ENCODE measurements at regions of chrX and their contacts with region 1.

Region 1: DNA sequence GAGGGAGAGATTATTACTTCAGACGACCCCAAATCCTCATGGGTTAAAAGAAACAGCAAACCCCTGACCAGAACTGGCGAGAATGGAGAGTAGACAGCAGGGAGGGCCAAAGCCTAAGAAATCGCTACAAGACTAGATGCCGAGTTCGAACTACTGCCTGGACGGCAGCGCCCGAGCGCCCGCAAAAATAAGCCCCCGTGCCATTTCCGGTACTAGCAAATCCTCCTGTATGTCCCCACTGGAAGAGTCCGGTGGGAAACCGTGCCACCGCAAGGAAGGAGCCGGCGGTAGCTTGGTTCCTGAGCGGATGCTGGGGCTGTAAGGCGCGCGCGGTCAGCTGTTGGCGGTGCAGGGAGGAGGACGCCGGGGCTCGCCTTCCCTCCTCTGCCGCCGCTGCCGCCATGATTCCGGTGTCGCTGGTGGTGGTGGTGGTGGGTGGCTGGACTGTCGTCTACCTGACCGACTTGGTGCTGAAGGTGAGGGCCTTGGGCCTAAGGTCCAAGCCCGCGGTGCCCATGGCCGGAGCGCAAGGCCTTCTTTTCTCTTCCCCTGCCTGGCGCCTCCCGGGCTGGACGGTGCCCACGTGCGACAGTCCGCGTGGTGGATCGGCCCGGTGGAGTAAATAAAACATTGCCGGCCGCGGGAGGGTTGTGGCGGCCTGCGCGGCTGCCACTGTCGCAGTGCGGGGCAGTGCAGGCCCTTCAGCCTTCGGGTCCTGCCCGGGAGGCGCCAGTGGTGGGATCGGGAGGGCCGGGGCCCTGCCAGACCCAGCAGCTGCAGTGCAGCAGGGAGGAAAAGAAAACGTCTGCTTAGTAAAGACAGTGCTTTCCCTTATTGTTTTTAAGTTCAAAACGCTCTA is at the start of gene MBTPS2:
- DNase-seq: peak; percentile 73
- H3K4me3 Mint-ChIP-seq: peak within 1 kb of the TSS; percentile 88
- H3K27ac Mint-ChIP-seq: peak within 1 kb of the TSS; percentile 90
- H3K4me1 Mint-ChIP-seq: peaks cover 14% of the 10 kb centered on the region
- H3K27me3 Mint-ChIP-seq: no peaks in the 10 kb centered on the region
- total RNA-seq, gene MBTPS2: 10.5 and 11.3 TPM in 2 replicates

Region 2: DNA sequence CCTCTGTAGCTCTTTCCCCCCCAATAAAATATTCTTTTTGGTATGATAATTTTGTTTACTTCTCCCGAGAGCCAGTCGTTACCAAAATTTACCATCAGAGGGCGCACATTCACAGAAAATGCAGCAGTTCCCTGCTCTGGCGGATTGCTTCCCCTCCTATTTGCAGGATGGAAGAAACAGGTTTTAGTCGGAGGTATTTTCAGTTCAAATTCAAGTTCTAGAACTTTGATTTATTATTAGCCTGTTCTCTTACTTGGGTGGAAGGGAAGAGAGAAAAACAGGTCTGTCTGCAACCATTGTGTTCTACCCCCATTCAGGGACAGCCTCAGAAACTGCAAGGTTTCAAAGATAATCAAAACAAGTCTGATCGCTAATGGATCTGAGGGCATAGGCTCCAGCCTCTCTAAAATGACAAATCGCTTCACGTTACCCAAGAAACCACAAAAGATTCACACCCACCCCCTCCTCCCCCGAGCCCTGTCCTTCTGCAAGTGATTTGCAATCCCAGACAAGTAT is 1309.1 kb before region 1 on chrX:
- intact Hi-C with region 1: loop called (anchors 2 kb)
- DNase-seq: peak; percentile 19
- H3K4me3 Mint-ChIP-seq: no peak overlapping the region
- H3K27ac Mint-ChIP-seq: no peak overlapping the region
- H3K4me1 Mint-ChIP-seq: peaks cover 11% of the 10 kb centered on the region
- H3K27me3 Mint-ChIP-seq: peaks cover 41% of the 10 kb centered on the region

Region 3: DNA sequence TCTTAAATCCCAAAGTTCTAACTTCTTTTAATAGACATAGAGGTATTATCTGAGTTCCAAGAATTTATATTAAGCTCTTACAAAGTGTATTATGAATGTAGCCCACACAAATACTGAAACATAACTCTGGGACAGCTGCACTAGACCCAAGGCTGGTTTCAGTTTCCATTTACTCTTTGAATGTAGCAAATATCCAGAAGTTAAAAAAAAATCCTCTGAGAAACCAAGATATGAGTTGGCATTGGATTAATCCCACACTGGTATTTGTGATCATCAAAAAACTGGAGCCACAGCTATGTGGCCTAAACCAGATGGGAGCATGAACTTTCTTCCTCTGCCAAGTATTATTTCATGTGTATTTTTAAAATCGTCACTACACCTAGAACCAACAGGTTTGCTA is 58.0 kb before region 1 on chrX:
- intact Hi-C with region 1: loop called (anchors 2 kb)
- DNase-seq: no peak
- H3K4me3 Mint-ChIP-seq: no peak overlapping the region
- H3K27ac Mint-ChIP-seq: no peak overlapping the region
- H3K4me1 Mint-ChIP-seq: peaks cover 22% of the 10 kb centered on the region
- H3K27me3 Mint-ChIP-seq: peaks cover 5% of the 10 kb centered on the region

Region 4: DNA sequence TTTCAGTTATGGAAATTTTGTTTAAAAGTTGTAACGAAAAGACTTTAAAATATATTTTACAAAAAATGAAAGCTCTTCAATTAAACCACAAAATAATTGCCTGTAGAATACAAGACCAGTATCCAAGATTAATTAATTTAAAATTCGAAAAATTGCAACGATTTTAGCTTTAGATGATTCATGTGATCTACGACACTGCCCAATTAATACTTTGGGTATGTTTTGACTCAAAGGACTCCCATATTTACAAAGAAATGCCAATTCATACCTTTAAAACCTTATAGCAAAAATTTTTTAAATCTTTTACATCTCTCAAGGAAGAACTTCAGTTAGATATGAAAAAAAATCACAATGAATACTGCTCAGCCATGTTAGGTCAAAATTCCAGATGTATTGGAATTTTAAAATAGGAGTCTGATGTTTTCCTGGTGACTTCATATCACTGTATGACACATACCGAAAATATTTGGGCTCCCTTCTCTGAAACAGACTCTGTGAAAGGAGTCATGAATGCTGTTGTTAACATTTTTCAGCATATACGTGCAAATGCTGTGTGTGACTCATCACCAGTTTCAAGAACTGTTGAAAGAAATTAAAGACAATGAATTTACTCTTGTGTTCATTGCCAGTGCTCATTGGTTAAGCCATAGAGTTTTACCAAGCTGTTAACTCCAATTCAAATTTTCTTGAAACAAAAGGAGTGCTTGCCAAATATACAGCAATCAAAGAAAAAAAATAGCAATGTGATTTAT is 87.1 kb after region 1 on chrX:
- intact Hi-C with region 1: loop called (anchors 1 kb)
- DNase-seq: no peak
- H3K4me3 Mint-ChIP-seq: no peak overlapping the region
- H3K27ac Mint-ChIP-seq: peak overlapping the region; percentile 67
- H3K4me1 Mint-ChIP-seq: peaks cover 35% of the 10 kb centered on the region
- H3K27me3 Mint-ChIP-seq: no peaks in the 10 kb centered on the region

Region 5: GRCh38 chrX:21940356-21940829 is 100.8 kb after region 1 on chrX and contains the start of gene SMS:
- intact Hi-C with region 1: loop called (anchors 1 kb)
- DNase-seq: peak; percentile 23
- H3K4me3 Mint-ChIP-seq: peak within 1 kb of the TSS; percentile 90
- H3K27ac Mint-ChIP-seq: peak within 1 kb of the TSS; percentile 92
- H3K4me1 Mint-ChIP-seq: peaks cover 35% of the 10 kb centered on the region
- H3K27me3 Mint-ChIP-seq: no peaks in the 10 kb centered on the region
- total RNA-seq, gene SMS: 144 and 145 TPM in 2 replicates

Region 6: GRCh38 chrX:21972721-21973120 is 133.2 kb after region 1 on chrX:
- intact Hi-C with region 1: loop called (anchors 1 kb)
- DNase-seq: peak; percentile 20
- H3K4me3 Mint-ChIP-seq: peak overlapping the region; percentile 72
- H3K27ac Mint-ChIP-seq: peak overlapping the region; percentile 90
- H3K4me1 Mint-ChIP-seq: peaks cover 45% of the 10 kb centered on the region
- H3K27me3 Mint-ChIP-seq: no peaks in the 10 kb centered on the region

Region 7: GRCh38 chrX:22192417-22193060 is 353.0 kb after region 1 on chrX:
- intact Hi-C with region 1: loop called (anchors 10 kb)
- DNase-seq: peak; percentile 17
- H3K4me3 Mint-ChIP-seq: no peak overlapping the region
- H3K27ac Mint-ChIP-seq: no peak overlapping the region
- H3K4me1 Mint-ChIP-seq: peaks cover 5% of the 10 kb centered on the region
- H3K27me3 Mint-ChIP-seq: no peaks in the 10 kb centered on the region

Region 8: GRCh38 chrX:22486296-22486695 is 646.7 kb after region 1 on chrX:
- intact Hi-C with region 1: no loop called
- DNase-seq: no peak
- H3K4me3 Mint-ChIP-seq: no peak overlapping the region
- H3K27ac Mint-ChIP-seq: no peak overlapping the region
- H3K4me1 Mint-ChIP-seq: no peaks in the 10 kb centered on the region
- H3K27me3 Mint-ChIP-seq: peaks cover 1% of the 10 kb centered on the region

Measured in activated T-helper 1 cell treated with anti-CD3 and anti-CD28 coated beads, Interleukin-12 subunit alpha, Interleukin-12 subunit beta, Interleukin-2, Interleukin-4 antibody, amounts not matched to agents 30 ng/mL and 10 ng/mL and 1 ng/mL, durations not matched to agents 14 hours and 24 hours and 36 hours (primary cell).